ENCODE measurements at regions of chr2 and their contacts with region 1.

Region 1: GRCh38 chr2:8514796-8515758 is 166.8 kb upstream of the ID2 start:
- DNase-seq: peak; percentile 58
- H3K4me3 Mint-ChIP-seq: peak overlapping the region; percentile 45
- H3K27ac Mint-ChIP-seq: peak overlapping the region; percentile 97
- H3K4me1 Mint-ChIP-seq: peaks cover 60% of the 10 kb centered on the region
- H3K27me3 Mint-ChIP-seq: no peaks in the 10 kb centered on the region

Region 2: DNA sequence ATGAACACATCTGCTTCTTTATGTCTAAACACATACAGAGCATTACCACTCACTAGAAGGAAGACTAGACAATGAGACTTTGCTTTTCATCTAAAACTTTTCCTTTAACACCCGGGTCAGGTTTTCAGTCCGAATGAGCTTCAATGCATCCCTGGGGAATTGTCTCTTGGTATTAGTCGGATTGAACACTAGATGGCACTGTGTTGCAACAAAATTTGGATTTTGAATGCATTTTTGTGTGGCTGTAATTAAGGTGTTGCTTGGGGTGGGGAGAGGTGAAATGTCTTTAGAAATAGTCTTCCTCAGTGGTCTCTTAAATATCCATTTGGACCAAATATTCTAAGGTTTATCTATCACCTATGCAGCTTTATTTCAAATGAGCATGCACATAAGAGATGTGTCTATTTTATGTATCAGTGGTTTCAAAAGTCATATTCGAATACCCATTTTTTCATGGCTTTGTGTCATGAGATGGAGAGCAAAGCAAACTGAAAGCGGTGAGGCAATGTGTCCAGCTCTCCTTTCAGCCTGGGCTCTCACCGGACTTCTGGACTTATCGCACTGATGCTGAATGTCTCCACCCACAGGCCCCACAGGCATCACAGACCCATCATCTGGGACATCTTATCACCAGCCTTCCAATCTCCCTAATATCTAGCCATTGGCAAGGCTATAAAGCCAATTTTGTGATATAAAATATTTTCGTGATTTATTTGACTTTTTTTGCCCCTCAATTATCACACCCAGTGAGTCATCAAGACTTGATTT is 1087.6 kb before region 1 on chr2:
- intact Hi-C with region 1: loop called (anchors 10 kb)
- DNase-seq: no peak
- H3K4me3 Mint-ChIP-seq: peak overlapping the region; percentile 49
- H3K27ac Mint-ChIP-seq: peak overlapping the region; percentile 78
- H3K4me1 Mint-ChIP-seq: peaks cover 45% of the 10 kb centered on the region
- H3K27me3 Mint-ChIP-seq: no peaks in the 10 kb centered on the region

Region 3: GRCh38 chr2:7672027-7672684 is 842.9 kb before region 1 on chr2:
- intact Hi-C with region 1: loop called (anchors 10 kb)
- DNase-seq: peak; percentile 51
- H3K4me3 Mint-ChIP-seq: peak overlapping the region; percentile 63
- H3K27ac Mint-ChIP-seq: peak overlapping the region; percentile 97
- H3K4me1 Mint-ChIP-seq: peaks cover 60% of the 10 kb centered on the region
- H3K27me3 Mint-ChIP-seq: no peaks in the 10 kb centered on the region

Region 4: GRCh38 chr2:8049851-8050571 is 465.1 kb before region 1 on chr2:
- intact Hi-C with region 1: loop called (anchors 1 kb)
- DNase-seq: peak; percentile 63
- H3K4me3 Mint-ChIP-seq: peak overlapping the region; percentile 30
- H3K27ac Mint-ChIP-seq: peak overlapping the region; percentile 86
- H3K4me1 Mint-ChIP-seq: peaks cover 53% of the 10 kb centered on the region
- H3K27me3 Mint-ChIP-seq: no peaks in the 10 kb centered on the region

Region 5: GRCh38 chr2:8303322-8303832 is 211.7 kb before region 1 on chr2:
- intact Hi-C with region 1: loop called (anchors 2 kb)
- DNase-seq: peak; percentile 82
- H3K4me3 Mint-ChIP-seq: peak overlapping the region; percentile 49
- H3K27ac Mint-ChIP-seq: peak overlapping the region; percentile 47
- H3K4me1 Mint-ChIP-seq: peaks cover 81% of the 10 kb centered on the region
- H3K27me3 Mint-ChIP-seq: no peaks in the 10 kb centered on the region

Region 6: GRCh38 chr2:8477552-8478470 is 37.3 kb before region 1 on chr2:
- intact Hi-C with region 1: loop called (anchors 1 kb)
- DNase-seq: no peak
- H3K4me3 Mint-ChIP-seq: peak overlapping the region; percentile 5
- H3K27ac Mint-ChIP-seq: peak overlapping the region; percentile 72
- H3K4me1 Mint-ChIP-seq: peaks cover 79% of the 10 kb centered on the region
- H3K27me3 Mint-ChIP-seq: no peaks in the 10 kb centered on the region

Region 7: DNA sequence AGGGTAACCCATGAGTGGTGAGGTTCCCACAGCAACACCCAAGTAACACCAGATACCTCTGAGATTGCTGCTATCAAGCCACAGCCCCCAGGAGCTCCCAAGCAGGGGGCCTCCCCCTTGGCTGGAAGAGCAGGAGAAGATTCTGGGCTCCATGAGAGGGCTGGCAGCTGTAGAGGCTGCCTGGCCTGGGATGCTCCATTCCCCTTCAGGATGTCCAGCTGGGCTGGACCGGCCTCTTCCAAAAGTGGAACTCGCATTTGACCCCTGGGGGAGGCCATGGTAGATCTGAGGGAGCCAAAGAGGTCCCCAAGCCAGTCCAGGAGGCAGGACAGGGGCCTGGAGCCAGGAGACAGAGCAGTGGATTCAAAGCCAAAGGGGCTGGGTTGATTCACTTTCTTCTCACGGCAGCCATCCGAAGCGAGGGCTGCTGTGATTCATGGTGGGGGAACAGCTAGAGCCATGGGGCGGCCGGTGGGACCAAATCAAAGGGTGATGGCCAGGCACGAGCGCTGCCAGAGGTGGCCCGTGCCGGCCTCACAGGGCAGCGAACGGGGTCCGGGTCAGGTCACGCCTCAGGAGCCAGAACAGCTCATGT is 71.5 kb after region 1 on chr2:
- intact Hi-C with region 1: loop called (anchors 1 kb)
- DNase-seq: no peak
- H3K4me3 Mint-ChIP-seq: peak overlapping the region; percentile 26
- H3K27ac Mint-ChIP-seq: peak overlapping the region; percentile 57
- H3K4me1 Mint-ChIP-seq: peaks cover 52% of the 10 kb centered on the region
- H3K27me3 Mint-ChIP-seq: peaks cover 16% of the 10 kb centered on the region

Region 8: DNA sequence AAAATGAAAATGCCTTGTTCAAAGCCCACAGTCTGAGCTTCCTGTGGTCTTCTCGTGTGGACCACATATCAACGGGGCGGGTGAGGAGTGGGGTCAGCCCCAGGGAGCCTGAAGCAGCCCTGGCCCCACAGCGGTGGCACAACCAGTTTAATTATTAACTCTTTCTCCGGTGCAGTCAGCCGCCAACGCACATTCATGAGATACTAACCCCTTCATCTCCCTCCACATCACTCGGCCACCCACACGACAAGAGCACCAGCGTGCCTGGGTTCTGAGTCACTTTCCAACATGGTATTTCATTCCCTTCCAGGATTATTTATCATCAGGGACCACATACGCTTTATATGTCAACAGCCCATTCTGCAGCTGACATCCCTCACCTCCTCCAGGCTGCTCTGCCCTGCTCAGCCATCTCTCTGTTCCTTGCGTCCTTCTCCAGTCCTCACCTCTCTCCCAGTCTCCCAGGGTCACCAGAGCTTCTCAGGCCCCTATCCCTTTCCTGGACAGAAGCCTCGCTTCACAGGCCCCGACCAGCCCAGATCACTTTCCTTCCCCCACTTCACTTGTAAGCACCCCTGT is 118.7 kb after region 1 on chr2:
- intact Hi-C with region 1: no loop called
- DNase-seq: no peak
- H3K4me3 Mint-ChIP-seq: no peak overlapping the region
- H3K27ac Mint-ChIP-seq: no peak overlapping the region
- H3K4me1 Mint-ChIP-seq: peaks cover 2% of the 10 kb centered on the region
- H3K27me3 Mint-ChIP-seq: peaks cover 26% of the 10 kb centered on the region